Activated T-helper 2 cell treated with anti-CD3 and anti-CD28 coated beads, Interferon-gamma antibody, Interleukin-2, Interleukin-4, amounts not matched to agents 10 μg/mL and 5 μg/mL and 100 μg/mL, durations not matched to agents 14 hours and 24 hours and 36 hours (primary cell): ENCODE measurements at regions of chr17 and their contacts with region 1.

Region 1: DNA sequence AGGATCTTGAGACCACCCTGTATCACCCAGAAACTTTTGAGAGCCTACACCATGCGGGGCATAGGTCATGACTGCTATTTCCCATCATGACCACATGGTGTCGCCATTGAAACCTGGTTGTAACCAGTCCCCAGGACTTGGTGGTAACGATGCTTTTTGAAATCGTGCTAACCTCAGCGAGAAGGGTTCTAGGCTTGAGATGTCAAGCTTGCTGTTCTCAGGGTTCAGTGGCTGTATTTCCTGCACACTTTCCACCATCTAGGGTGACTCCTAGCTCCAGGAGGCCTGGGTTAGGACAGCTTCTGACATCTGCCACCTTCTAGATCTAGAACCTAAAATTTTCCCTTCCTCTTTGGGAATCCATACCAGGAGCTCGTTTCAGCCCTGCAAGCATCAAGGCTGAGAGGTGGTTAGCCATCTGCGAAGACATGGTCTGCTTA is 13.0 kb upstream of the SPNS3 start:
- DNase-seq: peak; percentile 59
- H3K4me3 Mint-ChIP-seq: no peak overlapping the region
- H3K27ac Mint-ChIP-seq: no peak overlapping the region
- H3K4me1 Mint-ChIP-seq: peaks cover 4% of the 10 kb centered on the region
- H3K27me3 Mint-ChIP-seq: peaks cover 7% of the 10 kb centered on the region

Region 2: GRCh38 chr17:4498461-4499397 is 78.0 kb after region 1 on chr17 and contains the start of gene SPNS2:
- intact Hi-C with region 1: loop called (anchors 10 kb)
- DNase-seq: peak; percentile 58
- H3K4me3 Mint-ChIP-seq: peak within 1 kb of the TSS; percentile 64
- H3K27ac Mint-ChIP-seq: no peak within 1 kb of the TSS
- H3K4me1 Mint-ChIP-seq: peaks cover 10% of the 10 kb centered on the region
- H3K27me3 Mint-ChIP-seq: peaks cover 35% of the 10 kb centered on the region
- total RNA-seq, gene SPNS2: 0.09 and 0.16 TPM in 2 replicates

Region 3: DNA sequence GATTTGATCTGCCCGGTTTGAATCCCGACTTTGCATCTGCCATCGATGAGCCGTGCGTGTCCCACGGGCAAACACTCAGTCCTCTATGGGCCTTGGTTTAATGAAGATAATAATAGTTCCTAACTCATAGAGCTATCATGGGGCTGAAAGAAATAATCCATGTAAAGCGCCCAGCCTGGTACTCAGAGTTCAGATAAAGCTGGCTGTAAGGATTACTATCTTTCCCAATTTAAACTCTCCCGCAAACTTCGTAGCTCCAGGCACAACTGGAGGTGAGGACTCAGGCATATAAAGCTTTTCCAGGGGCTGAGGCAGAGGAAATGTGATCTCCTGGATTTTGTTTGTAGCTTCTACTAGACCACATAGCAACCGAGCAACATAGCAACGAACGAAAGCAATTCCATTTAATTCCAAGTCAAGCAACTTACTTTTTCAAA is 204.5 kb after region 1 on chr17:
- intact Hi-C with region 1: loop called (anchors 5 kb)
- DNase-seq: no peak
- H3K4me3 Mint-ChIP-seq: no peak overlapping the region
- H3K27ac Mint-ChIP-seq: no peak overlapping the region
- H3K4me1 Mint-ChIP-seq: no peaks in the 10 kb centered on the region
- H3K27me3 Mint-ChIP-seq: peaks cover 36% of the 10 kb centered on the region